ENCODE measurements at regions of chr5 and their contacts with region 1.

Region 1: GRCh38 chr5:38316544-38317224 is 58.3 kb downstream of the EGFLAM start:
- DNase-seq: no peak
- H3K4me3 ChIP-seq: no peak overlapping the region
- H3K27ac ChIP-seq: no peak overlapping the region
- H3K4me1 ChIP-seq: no peaks in the 10 kb centered on the region
- H3K27me3 ChIP-seq: peaks cover 2% of the 10 kb centered on the region
- CTCF ChIP-seq: no peak

Region 2: GRCh38 chr5:37249687-37250101 is 1067.0 kb before region 1 on chr5:
- CTCF ChIA-PET with region 1: no interaction called
- dilution Hi-C with region 1: no loop called
- in situ Hi-C with region 1: no loop called
- intact Hi-C with region 1: no loop called
- DNase-seq: no peak
- H3K4me3 ChIP-seq: peak overlapping the region; percentile 84 to 97 (median 87)
- H3K27ac ChIP-seq: no peak overlapping the region
- H3K4me1 ChIP-seq: peaks cover 4% of the 10 kb centered on the region
- H3K27me3 ChIP-seq: no peaks in the 10 kb centered on the region
- CTCF ChIP-seq: no peak

Region 3: DNA sequence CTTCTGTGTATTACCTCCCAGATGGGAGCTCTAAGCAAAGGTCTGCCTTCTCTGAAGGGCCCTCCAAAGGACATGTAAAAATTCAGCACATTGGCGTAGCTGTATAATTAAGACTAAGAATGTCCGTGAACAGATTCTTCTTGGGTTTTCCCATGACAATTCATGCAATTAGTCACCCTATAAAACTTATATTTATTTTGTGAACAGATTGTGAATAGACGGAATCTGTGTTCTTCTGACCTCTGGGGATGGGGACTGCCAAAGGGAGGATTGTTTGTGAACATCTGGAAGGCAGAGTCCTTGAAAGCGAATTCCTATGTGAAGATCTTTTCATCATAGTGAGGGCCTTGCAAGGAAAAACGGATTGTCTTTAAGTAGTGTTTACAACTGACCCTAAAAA is 53.0 kb after region 1 on chr5:
- CTCF ChIA-PET with region 1: no interaction called
- dilution Hi-C with region 1: loop called (anchors 5 kb)
- in situ Hi-C with region 1: no loop called
- intact Hi-C with region 1: no loop called
- DNase-seq: no peak
- H3K4me3 ChIP-seq: no peak overlapping the region
- H3K27ac ChIP-seq: no peak overlapping the region
- H3K4me1 ChIP-seq: no peaks in the 10 kb centered on the region
- H3K27me3 ChIP-seq: peaks cover 7% of the 10 kb centered on the region
- CTCF ChIP-seq: no peak

Region 4: GRCh38 chr5:38384396-38384795 is 67.7 kb after region 1 on chr5:
- CTCF ChIA-PET with region 1: no interaction called
- dilution Hi-C with region 1: no loop called
- in situ Hi-C with region 1: no loop called
- intact Hi-C with region 1: no loop called
- DNase-seq: no peak
- H3K4me3 ChIP-seq: no peak overlapping the region
- H3K27ac ChIP-seq: no peak overlapping the region
- H3K4me1 ChIP-seq: no peaks in the 10 kb centered on the region
- H3K27me3 ChIP-seq: peaks cover under 1% of the 10 kb centered on the region
- CTCF ChIP-seq: no peak